Mammary epithelial cell (primary cell): ENCODE measurements at regions of chr12 and their contacts with region 1.

Region 1: GRCh38 chr12:59149997-59150642 is 229.8 kb upstream of the LRIG3 start:
- DNase-seq: peak; percentile 68
- H3K4me3 ChIP-seq: no peak overlapping the region
- H3K27ac ChIP-seq: no peak overlapping the region
- H3K4me1 ChIP-seq: no peaks in the 10 kb centered on the region
- H3K27me3 ChIP-seq: no peaks in the 10 kb centered on the region
- CTCF ChIP-seq: peak; percentile 98 to 99

Region 2: DNA sequence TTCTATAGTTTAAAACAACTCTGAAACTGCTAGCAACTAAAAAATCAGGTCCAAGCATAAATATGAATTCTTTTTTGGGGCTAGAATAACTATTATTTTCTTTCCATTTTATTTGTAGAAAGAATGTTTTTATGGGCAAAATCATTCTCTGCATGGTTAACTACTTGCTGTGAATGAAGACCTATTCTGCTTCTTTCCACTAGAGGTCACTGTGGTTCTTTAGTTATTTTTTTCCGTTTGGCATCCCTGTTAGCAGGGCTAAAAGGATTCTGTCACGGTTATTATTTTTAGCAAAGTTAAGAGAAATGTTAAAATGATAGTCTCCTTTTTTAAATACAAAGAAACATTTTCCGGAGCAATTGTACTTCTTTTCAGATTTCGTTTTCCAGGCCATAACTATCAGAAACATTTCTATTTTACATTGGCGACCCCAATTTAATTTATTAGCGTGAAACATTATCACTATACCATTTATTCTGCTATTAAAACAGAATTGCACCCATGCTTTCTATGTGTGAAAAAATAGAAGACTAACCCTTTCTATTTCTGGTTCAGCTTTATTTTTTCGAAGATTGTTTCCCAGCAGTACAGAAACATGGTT is 804.0 kb before region 1 on chr12:
- CTCF ChIA-PET with region 1: no interaction called
- dilution Hi-C with region 1: no loop called
- in situ Hi-C with region 1: no loop called
- intact Hi-C with region 1: loop called (anchors 1 kb)
- DNase-seq: peak; percentile 26
- H3K4me3 ChIP-seq: no peak overlapping the region
- H3K27ac ChIP-seq: no peak overlapping the region
- H3K4me1 ChIP-seq: no peaks in the 10 kb centered on the region
- H3K27me3 ChIP-seq: no peaks in the 10 kb centered on the region
- CTCF ChIP-seq: peak; percentile 73 to 77

Region 3: DNA sequence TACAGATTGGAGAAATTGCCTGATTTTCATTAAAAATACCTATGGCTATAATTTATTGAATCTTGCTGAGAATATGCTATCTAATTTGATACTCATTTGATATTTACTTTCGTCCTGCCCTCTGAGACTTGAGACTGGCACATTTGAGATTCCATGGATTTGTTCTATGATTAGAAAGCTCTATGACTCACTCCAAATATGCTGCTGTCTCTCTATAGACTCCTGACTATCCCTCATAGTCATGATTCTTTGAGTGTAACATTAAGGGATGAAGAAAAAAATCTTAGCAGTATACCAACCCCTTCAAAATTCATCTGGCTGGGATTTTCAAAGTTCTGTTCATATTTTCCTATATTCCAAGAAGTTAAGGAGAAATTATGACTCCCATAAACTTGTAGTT is 421.7 kb before region 1 on chr12:
- CTCF ChIA-PET with region 1: no interaction called
- dilution Hi-C with region 1: no loop called
- in situ Hi-C with region 1: no loop called
- intact Hi-C with region 1: no loop called
- DNase-seq: peak; percentile 5
- H3K4me3 ChIP-seq: no peak overlapping the region
- H3K27ac ChIP-seq: no peak overlapping the region
- H3K4me1 ChIP-seq: no peaks in the 10 kb centered on the region
- H3K27me3 ChIP-seq: no peaks in the 10 kb centered on the region
- CTCF ChIP-seq: no peak

Region 4: GRCh38 chr12:58833853-58834252 is 316.3 kb before region 1 on chr12:
- CTCF ChIA-PET with region 1: no interaction called
- dilution Hi-C with region 1: no loop called
- in situ Hi-C with region 1: no loop called
- intact Hi-C with region 1: loop called (anchors 10 kb)
- DNase-seq: no peak
- H3K4me3 ChIP-seq: no peak overlapping the region
- H3K27ac ChIP-seq: no peak overlapping the region
- H3K4me1 ChIP-seq: no peaks in the 10 kb centered on the region
- H3K27me3 ChIP-seq: no peaks in the 10 kb centered on the region
- CTCF ChIP-seq: peak in 1 of 2 donors; percentile 20

Region 5: DNA sequence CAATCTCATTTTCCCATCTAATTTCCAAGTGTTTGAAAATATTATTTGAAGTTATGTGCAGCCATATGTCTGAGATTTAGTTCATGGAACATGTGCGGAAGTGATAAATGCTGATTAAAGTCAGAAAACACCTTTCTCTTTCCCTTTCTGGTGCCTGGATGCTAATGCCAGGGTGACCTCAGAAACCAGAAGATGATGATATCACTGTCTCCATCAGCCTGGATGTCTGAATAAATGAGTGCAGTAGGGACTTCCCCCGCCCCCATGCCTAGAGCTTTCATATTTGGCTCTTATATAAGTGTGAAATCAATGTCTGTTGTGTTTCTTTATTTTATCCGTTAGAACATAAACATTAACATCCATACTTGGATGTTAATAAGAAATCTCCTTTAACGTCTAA is 32.1 kb after region 1 on chr12:
- CTCF ChIA-PET with region 1: no interaction called
- dilution Hi-C with region 1: no loop called
- in situ Hi-C with region 1: no loop called
- intact Hi-C with region 1: no loop called
- DNase-seq: peak; percentile 69
- H3K4me3 ChIP-seq: no peak overlapping the region
- H3K27ac ChIP-seq: no peak overlapping the region
- H3K4me1 ChIP-seq: peaks cover 8% of the 10 kb centered on the region
- H3K27me3 ChIP-seq: no peaks in the 10 kb centered on the region
- CTCF ChIP-seq: no peak